Activated naive CD4-positive, alpha-beta T cell treated with anti-CD3 and anti-CD28 coated beads for 36 hours (primary cell): ENCODE measurements at regions of chr1 and their contacts with region 1.

Region 1: GRCh38 chr1:226062558-226063223 is at the start of gene H3-3A:
- DNase-seq: peak; percentile 98
- H3K4me3 Mint-ChIP-seq: peak within 1 kb of the TSS; percentile 100
- H3K27ac Mint-ChIP-seq: peak within 1 kb of the TSS; percentile 98
- H3K4me1 Mint-ChIP-seq: peaks cover 36% of the 10 kb centered on the region
- H3K27me3 Mint-ChIP-seq: no peaks in the 10 kb centered on the region
- total RNA-seq, gene H3-3A: 325 to 332 TPM

Region 2: GRCh38 chr1:225428068-225428880 is 634.4 kb before region 1 on chr1:
- CTCF ChIA-PET with region 1: no interaction called
- intact Hi-C with region 1: loop called (anchors 1 kb)
- DNase-seq: peak; percentile 94
- H3K4me3 Mint-ChIP-seq: peak overlapping the region; percentile 85
- H3K27ac Mint-ChIP-seq: peak overlapping the region; percentile 96
- H3K4me1 Mint-ChIP-seq: peaks cover 43% of the 10 kb centered on the region
- H3K27me3 Mint-ChIP-seq: no peaks in the 10 kb centered on the region

Region 3: GRCh38 chr1:225777583-225778336 is 284.9 kb before region 1 on chr1 and contains the start of gene SRP9:
- CTCF ChIA-PET with region 1: no interaction called
- intact Hi-C with region 1: loop called (anchors 1 kb)
- DNase-seq: peak; percentile 99
- H3K4me3 Mint-ChIP-seq: no peak within 1 kb of the TSS
- H3K27ac Mint-ChIP-seq: no peak within 1 kb of the TSS
- H3K4me1 Mint-ChIP-seq: peaks cover 32% of the 10 kb centered on the region
- H3K27me3 Mint-ChIP-seq: no peaks in the 10 kb centered on the region
- total RNA-seq, gene SRP9: 356 to 363 TPM

Region 4: DNA sequence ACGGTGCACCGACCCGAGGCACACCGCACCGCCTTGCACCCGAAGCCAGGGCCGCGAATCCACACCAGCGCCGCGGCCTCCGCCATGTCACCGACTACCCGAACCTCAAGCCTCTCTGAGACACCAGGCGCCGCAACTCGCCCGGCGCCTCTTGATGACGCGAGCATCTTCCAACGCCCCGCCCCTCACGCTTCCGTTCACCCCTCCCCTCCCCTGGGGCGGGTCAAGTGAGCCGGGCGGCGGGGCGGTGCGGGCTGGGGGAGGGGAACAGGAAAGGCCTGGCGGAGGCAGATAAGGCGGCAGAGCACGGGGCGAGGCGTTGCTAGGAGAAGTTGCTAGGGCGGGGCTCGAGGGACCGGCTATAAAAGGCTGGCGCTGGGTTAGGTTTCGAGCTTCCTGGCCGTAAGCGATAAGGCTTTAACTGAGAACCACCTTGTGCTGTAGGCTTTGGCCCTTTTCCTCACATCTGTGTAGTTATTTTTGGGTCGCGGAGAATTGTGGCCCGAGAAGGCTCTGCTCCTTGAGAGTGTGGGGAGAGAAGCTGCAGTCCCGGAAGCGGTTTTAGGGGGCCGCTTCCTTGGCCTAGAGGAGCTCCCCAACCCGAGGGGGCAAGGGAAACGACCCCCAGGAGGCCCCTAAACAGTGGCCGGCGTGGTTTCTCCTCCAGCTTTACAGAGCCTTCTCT is 63.3 kb before region 1 on chr1 and contains the start of gene SDE2:
- CTCF ChIA-PET with region 1: interaction called, 9 read pairs
- intact Hi-C with region 1: loop called (anchors 1 kb)
- DNase-seq: peak; percentile 100
- H3K4me3 Mint-ChIP-seq: peak within 1 kb of the TSS; percentile 100
- H3K27ac Mint-ChIP-seq: peak within 1 kb of the TSS; percentile 100
- H3K4me1 Mint-ChIP-seq: peaks cover 68% of the 10 kb centered on the region
- H3K27me3 Mint-ChIP-seq: no peaks in the 10 kb centered on the region
- total RNA-seq, gene SDE2: 15.3 to 16.5 TPM

Region 5: DNA sequence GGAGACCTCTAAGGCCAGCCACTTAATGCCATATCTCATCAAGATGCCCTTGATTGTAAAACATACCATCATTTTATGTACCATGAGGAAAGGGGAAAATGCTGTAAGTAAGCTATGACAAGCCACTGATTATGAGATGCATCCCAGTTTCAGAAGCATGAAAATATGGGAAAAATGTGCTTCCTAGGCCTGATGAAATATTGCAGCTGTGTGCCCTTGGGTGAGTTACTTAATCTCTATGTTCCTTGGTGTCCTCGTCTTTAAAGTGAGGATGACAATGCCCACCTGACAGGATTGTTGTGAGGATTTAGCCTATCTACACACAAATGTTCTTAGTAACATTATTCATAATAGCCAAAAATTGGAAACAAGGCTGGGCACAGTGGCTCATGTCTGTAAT is 28.8 kb after region 1 on chr1:
- CTCF ChIA-PET with region 1: interaction called, 10 read pairs
- intact Hi-C with region 1: no loop called
- DNase-seq: no peak
- H3K4me3 Mint-ChIP-seq: no peak overlapping the region
- H3K27ac Mint-ChIP-seq: no peak overlapping the region
- H3K4me1 Mint-ChIP-seq: no peaks in the 10 kb centered on the region
- H3K27me3 Mint-ChIP-seq: no peaks in the 10 kb centered on the region

Region 6: DNA sequence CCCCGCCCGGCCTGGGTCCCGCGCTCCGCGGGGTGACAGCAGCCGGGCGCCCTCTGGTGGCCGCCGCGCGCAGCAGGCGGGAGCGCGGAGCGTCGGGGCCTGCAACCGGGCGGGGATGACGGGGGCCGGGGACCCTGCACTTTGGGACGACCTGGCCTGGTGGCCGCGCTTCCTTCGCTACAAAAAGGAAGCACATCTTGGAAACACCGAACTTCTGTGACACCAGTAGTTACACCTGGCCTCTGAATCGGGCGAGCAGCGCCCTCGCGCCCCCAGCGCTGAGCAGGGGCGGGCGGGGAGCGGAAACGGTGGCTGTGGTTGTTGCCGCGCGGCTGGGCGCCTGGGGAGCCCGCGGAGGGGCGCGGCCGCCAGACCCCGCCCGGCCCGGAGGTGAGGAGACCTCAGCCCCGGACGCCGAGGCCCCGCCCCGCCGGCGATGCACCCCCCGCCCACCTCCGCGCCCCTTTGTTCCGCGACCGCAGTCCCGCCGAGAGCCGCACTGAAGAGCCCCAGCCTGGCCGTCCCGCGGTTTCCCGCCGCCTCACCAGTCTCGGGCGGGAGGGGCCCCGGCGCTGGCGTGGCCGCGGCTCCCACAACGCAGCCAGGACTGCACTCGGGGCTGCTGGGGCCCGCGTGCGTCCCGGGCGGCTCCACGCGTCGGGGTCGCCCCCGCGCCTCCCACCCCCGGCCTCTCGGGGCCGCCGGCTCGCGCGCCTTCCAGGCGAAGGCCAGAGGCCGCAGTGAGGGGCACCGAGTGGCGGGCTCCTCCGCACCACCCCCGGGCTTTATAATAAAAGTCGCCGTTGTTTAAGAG is 59.1 kb after region 1 on chr1:
- CTCF ChIA-PET with region 1: interaction called, 51 read pairs
- intact Hi-C with region 1: loop called (anchors 1 kb)
- DNase-seq: peak; percentile 68
- H3K4me3 Mint-ChIP-seq: peak overlapping the region; percentile 76
- H3K27ac Mint-ChIP-seq: peak overlapping the region; percentile 50
- H3K4me1 Mint-ChIP-seq: peaks cover 22% of the 10 kb centered on the region
- H3K27me3 Mint-ChIP-seq: no peaks in the 10 kb centered on the region

Region 7: DNA sequence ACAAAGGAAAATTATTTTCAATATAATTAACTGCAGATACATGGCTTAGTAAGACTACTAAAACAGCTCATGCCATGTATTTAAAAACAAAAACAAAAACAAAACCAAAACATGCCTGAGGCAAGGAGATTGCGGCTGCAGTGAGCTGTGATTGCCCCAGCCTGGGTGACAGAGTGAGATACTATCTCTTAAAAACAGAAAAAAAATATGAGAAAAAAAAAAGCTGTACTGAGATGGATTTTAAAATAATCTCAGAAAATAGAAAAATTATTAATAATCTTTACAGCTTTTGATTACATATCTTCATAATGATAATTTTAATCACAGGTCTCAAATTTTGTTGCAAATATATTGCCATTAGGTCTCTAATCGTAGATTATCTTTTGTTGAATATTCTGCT is 270.3 kb after region 1 on chr1:
- CTCF ChIA-PET with region 1: interaction called, 7 read pairs
- intact Hi-C with region 1: loop called (anchors 10 kb)
- DNase-seq: no peak
- H3K4me3 Mint-ChIP-seq: no peak overlapping the region
- H3K27ac Mint-ChIP-seq: no peak overlapping the region
- H3K4me1 Mint-ChIP-seq: peaks cover 13% of the 10 kb centered on the region
- H3K27me3 Mint-ChIP-seq: no peaks in the 10 kb centered on the region